GM23248 (cell line): ENCODE measurements at regions of chr2 and their contacts with region 1.

Region 1: GRCh38 chr2:237581751-237582746 is 8.5 kb downstream of the RAB17 start:
- DNase-seq: peak; percentile 73
- H3K4me3 ChIP-seq: peak overlapping the region; percentile 56
- H3K27ac ChIP-seq: no peak overlapping the region
- H3K4me1 ChIP-seq: no peaks in the 10 kb centered on the region
- H3K27me3 ChIP-seq: no peaks in the 10 kb centered on the region

Region 2: DNA sequence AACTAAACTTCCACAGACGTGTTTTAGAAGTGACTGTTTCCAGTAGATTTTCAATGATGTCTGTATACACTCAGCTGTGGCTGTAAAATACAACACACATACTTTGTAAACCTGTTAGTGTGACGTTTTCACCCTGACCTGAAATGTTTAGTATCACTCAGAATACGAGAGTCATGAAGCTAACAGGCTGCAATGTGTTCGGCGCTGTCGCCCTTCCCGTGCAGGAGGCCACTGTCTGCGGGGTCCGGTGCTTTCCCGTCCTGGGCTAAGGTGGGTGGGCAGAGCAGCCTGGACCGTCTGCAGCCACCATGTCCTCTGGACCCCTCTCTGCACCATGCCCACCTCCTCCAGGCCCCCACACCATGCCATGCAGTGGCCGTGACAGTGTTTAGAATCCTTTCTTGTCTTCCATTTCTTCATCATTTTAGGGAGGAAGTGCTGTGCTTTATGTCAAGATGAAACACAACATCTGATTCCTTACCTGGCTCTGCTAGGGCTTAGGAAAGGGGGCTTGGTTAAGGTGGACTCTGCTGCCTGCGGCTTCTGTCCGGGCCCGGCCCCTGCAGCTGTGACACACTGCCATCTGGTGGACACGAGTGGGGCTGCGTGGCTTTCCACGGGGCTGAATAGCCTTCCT is 162.7 kb after region 1 on chr2:
- in situ Hi-C with region 1: loop called (anchors 10 kb)
- DNase-seq: peak; percentile 72
- H3K4me3 ChIP-seq: no peak overlapping the region
- H3K27ac ChIP-seq: 0 out of 2 replicates have a peak overlapping the region, but pooled peaks have one; percentile 26
- H3K4me1 ChIP-seq: peaks cover 12% of the 10 kb centered on the region
- H3K27me3 ChIP-seq: no peaks in the 10 kb centered on the region

Region 3: GRCh38 chr2:238263204-238264071 is 681.4 kb after region 1 on chr2:
- in situ Hi-C with region 1: loop called (anchors 25 kb)
- DNase-seq: peak; percentile 95
- H3K4me3 ChIP-seq: no peak overlapping the region
- H3K27ac ChIP-seq: peak overlapping the region; percentile 79
- H3K4me1 ChIP-seq: no peaks in the 10 kb centered on the region; the same call in 1 of the 2 replicates
- H3K27me3 ChIP-seq: no peaks in the 10 kb centered on the region